CD4-positive, alpha-beta T cell (primary cell): ENCODE measurements at regions of chr6 and their contacts with region 1.

Region 1: GRCh38 chr6:87066449-87067333 is 28.2 kb downstream of the CGA start:
- DNase-seq: peak in 10 of 14 experiments; percentile 3 to 66 (median 8)
- ATAC-seq: no peak
- H3K4me3 ChIP-seq: no peak overlapping the region
- H3K4me3 Mint-ChIP-seq: peak overlapping the region; percentile 17
- H3K27ac ChIP-seq: no peak overlapping the region
- H3K27ac Mint-ChIP-seq: no peak overlapping the region
- H3K4me1 ChIP-seq: no peaks in the 10 kb centered on the region
- H3K4me1 Mint-ChIP-seq: no peaks in the 10 kb centered on the region
- H3K27me3 ChIP-seq: peaks cover 0 to 7% of the 10 kb centered on the region in 2 experiments
- H3K27me3 Mint-ChIP-seq: peaks cover 26% of the 10 kb centered on the region
- CTCF ChIP-seq: peak; percentile 34

Region 2: DNA sequence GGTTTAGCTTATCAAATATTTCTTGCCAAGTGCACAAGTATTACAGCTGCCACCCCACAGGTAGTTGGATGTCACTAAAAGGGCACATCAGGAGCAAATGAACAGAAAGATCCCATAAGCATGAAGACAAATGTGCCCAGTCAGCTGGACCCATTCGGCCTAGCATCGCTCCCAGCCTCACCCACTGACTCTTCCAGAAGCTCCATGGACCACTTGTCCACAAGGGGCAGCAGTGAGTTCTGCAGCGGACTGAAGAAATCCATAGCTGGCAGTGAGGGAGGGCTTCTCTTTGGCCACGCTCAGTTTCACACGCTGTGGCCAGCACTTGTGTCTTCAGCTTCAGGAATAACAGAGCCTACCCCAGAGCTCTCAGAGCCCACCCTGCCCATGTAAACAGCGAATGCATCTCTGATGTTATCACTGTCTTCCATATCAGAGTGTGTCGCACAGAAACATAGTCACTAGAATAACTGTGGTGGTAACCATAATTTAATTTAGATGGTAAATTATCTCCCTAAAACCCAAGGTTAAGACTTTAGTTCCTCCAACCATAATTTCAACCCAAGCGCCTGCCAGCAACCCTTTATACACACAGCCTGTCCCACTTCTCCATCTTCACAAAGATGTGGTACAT is 12.4 kb after region 1 on chr6:
- CTCF ChIA-PET with region 1: interaction called, 18 read pairs
- POLR2A ChIA-PET with region 1: interaction called, 4 read pairs
- intact Hi-C with region 1: no loop called
- DNase-seq: peak; percentile 6 to 68 (median 34)
- ATAC-seq: no peak
- H3K4me3 ChIP-seq: no peak overlapping the region
- H3K4me3 Mint-ChIP-seq: no peak overlapping the region
- H3K27ac ChIP-seq: no peak overlapping the region
- H3K27ac Mint-ChIP-seq: no peak overlapping the region
- H3K4me1 ChIP-seq: no peaks in the 10 kb centered on the region
- H3K4me1 Mint-ChIP-seq: no peaks in the 10 kb centered on the region
- H3K27me3 ChIP-seq: peaks cover 2 to 10% of the 10 kb centered on the region in 2 experiments
- H3K27me3 Mint-ChIP-seq: peaks cover 36% of the 10 kb centered on the region
- CTCF ChIP-seq: peak; percentile 78